ENCODE measurements at regions of chr6 and their contacts with region 1.

Region 1: GRCh38 chr6:108492131-108492766 is 68.5 kb upstream of the FOXO3 start:
- DNase-seq: no peak

Region 2: GRCh38 chr6:108113557-108114519 is 378.4 kb before region 1 on chr6:
- intact Hi-C with region 1: loop called in 1 of 2 experiments (anchors 10 kb)
- DNase-seq: peak; percentile 75

Region 3: GRCh38 chr6:108155934-108156559 is 336.2 kb before region 1 on chr6:
- intact Hi-C with region 1: no loop called
- DNase-seq: no peak

Measured in posterior vena cava (tissue), 2 donors.